Naive thymus-derived CD4-positive, alpha-beta T cell (primary cell): ENCODE measurements at regions of chr2 and their contacts with region 1.

Region 1: DNA sequence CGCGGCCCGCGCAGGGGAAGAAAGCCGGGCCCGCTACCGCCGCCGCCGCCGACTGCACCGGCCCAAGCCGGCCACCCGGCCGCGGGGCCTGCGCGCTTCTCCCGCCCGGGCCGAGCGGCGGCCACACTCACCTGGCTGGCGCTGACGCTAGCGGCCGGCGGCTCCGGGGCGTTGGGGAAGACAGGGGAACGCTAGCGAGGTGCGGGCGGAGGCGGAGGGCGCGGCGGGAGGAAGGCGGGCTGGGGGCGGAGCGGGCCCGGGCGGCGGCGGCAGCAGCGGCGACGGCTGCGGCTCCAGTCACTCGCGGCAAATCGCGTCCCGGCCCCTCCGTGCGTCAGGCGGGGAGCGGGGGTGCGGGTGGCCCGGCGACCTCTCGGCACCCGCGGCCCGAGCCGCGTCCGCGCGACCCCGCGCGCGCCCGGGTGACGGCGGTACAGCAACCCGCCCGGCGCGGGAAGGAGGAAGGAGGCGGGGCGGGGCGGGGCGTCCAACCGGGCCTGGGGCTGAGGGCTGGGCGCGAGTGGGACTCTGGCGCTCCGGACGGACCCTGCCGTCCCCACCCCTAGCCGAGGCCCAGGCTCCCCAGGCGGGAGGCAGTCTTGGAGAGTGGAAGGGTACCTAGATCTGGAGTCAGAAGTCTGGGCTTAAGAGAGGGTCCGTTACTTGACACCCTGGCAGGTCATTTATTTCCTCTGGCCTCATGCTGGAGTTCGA is at the start of gene SESTD1:
- DNase-seq: peak; percentile 11 to 75 (median 47)
- ATAC-seq: peak; percentile 81
- H3K4me3 ChIP-seq: peak within 1 kb of the TSS; percentile 49
- H3K4me3 Mint-ChIP-seq: peak within 1 kb of the TSS; percentile 77 to 92 (median 86)
- H3K27ac ChIP-seq: peak within 1 kb of the TSS; percentile 60
- H3K27ac Mint-ChIP-seq: peak within 1 kb of the TSS in 7 of 9 donors; percentile 10 to 78 (median 45)
- H3K4me1 ChIP-seq: peaks cover 0 to 5% of the 10 kb centered on the region in 2 donors
- H3K4me1 Mint-ChIP-seq: peaks cover 13 to 24% (median 19%) of the 10 kb centered on the region in 7 donors
- H3K27me3 ChIP-seq: no peaks in the 10 kb centered on the region
- H3K27me3 Mint-ChIP-seq: peaks cover 34 to 48% (median 38%) of the 10 kb centered on the region in 5 donors
- total RNA-seq, gene SESTD1: 6.1 to 23.2 (median 8.1) TPM

Region 2: DNA sequence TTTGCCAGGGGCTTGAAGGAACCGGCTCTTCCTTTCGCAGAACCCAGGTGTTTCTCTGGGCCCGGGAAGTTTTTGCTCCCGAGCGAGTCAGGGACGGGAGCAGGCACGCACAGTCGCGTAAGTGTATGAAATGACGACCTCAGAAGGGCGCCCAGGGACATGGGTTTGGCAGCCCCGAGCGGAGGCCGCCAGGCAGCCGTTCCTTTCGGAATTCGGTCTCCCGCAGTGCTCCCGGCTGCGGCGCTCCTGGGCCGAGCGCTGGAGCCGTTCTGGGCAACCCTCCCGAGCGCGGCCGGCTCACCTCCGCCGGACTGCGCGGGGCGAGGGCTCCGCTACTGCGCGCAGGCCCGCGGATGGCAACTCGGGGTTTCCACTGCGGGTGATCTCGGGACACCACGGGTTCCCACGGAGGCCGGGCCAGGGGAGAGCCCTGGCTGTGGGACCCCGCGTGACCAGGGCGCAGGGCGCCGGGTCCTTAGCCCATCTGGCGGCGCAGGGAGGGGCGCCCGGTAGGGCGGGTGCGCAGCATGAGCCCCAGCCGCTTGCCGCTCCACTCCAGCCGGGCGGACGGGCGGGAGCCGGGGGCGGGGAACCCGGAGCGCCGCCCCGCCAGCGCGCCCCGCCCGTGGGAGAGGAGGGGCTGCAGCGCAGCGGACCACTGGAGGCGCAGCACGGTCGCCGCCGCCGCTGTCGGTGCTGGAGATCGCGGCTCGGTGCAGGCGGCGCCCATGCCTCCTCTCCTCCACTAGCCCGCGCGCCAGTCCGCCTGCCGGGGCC is 1070.5 kb before region 1 on chr2 and contains the start of gene OSBPL6:
- CTCF ChIA-PET with region 1: no interaction called
- POLR2A ChIA-PET with region 1: no interaction called
- intact Hi-C with region 1: loop called in 1 of 2 experiments (anchors 10 kb)
- DNase-seq: peak; percentile 10 to 82 (median 41)
- ATAC-seq: peak; percentile 87
- H3K4me3 ChIP-seq: peak within 1 kb of the TSS; percentile 46
- H3K4me3 Mint-ChIP-seq: peak within 1 kb of the TSS; percentile 56 to 83 (median 77)
- H3K27ac ChIP-seq: no peak within 1 kb of the TSS
- H3K27ac Mint-ChIP-seq: no peak within 1 kb of the TSS
- H3K4me1 ChIP-seq: peaks cover 6% of the 10 kb centered on the region in 2 donors
- H3K4me1 Mint-ChIP-seq: peaks cover 6 to 19% (median 13%) of the 10 kb centered on the region in 7 donors
- H3K27me3 ChIP-seq: peaks cover 18% of the 10 kb centered on the region in 2 donors
- H3K27me3 Mint-ChIP-seq: peaks cover 45 to 59% (median 54%) of the 10 kb centered on the region in 5 donors
- total RNA-seq, gene OSBPL6: 0.05 to 1.1 (median 0.44) TPM in 4 of 5 experiments, not detected in the other

Region 3: GRCh38 chr2:178450774-178451525 is 813.6 kb before region 1 on chr2 and contains the starts of genes PJVK and PRKRA:
- CTCF ChIA-PET with region 1: no interaction called
- POLR2A ChIA-PET with region 1: no interaction called
- intact Hi-C with region 1: loop called in 1 of 2 experiments (anchors 10 kb)
- DNase-seq: peak; percentile 92 to 99 (median 93)
- ATAC-seq: peak; percentile 94
- H3K4me3 ChIP-seq: peak within 1 kb of the TSS; percentile 94
- H3K4me3 Mint-ChIP-seq: peak within 1 kb of the TSS; percentile 90 to 96 (median 90)
- H3K27ac ChIP-seq: peak within 1 kb of the TSS; percentile 100
- H3K27ac Mint-ChIP-seq: peak within 1 kb of the TSS; percentile 88 to 98 (median 95)
- H3K4me1 ChIP-seq: peaks cover 12 to 25% of the 10 kb centered on the region in 2 donors
- H3K4me1 Mint-ChIP-seq: peaks cover 12 to 36% (median 30%) of the 10 kb centered on the region in 7 donors
- H3K27me3 ChIP-seq: no peaks in the 10 kb centered on the region
- H3K27me3 Mint-ChIP-seq: peaks cover 0 to 9% (median 0%) of the 10 kb centered on the region in 5 donors
- total RNA-seq, gene PJVK: 2.1 to 6.3 (median 3.8) TPM
- total RNA-seq, gene PRKRA: 40.8 to 113 (median 59.4) TPM

Region 4: DNA sequence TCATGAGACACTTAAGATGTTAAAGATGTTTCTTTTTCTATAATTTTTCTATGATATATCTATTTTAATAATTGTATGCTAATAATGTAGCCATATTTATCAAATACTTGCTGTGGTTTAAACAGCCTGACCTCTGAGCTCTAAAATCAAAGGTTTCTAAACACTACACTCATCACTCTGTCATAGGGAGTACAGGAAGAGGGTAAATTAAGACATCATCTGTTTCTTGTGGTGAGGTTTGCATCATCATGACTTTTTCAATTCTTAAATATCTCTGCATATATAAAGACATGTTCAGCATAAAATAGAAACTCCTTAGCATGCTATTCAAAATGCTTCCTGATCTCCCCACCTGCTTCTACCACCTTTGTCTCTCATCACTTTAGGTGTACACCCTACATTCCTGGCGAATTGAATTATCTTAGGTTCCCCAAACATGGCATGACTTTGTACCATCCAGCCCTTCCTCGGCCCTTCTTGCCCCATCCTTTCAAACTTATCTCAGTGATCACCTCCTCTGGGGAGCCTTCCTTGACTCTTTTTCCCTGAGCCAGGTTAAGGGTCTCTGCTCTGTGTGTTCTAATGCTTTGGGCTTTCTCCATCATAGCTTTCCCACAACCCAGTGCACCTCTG is 352.0 kb before region 1 on chr2:
- CTCF ChIA-PET with region 1: no interaction called
- POLR2A ChIA-PET with region 1: no interaction called
- intact Hi-C with region 1: no loop called
- DNase-seq: no peak
- ATAC-seq: peak; percentile 56
- H3K4me3 ChIP-seq: no peak overlapping the region
- H3K4me3 Mint-ChIP-seq: no peak overlapping the region
- H3K27ac ChIP-seq: no peak overlapping the region
- H3K27ac Mint-ChIP-seq: peak overlapping the region in 1 of 9 donors; percentile 9
- H3K4me1 ChIP-seq: no peaks in the 10 kb centered on the region
- H3K4me1 Mint-ChIP-seq: peaks cover 0 to 17% (median 4%) of the 10 kb centered on the region in 7 donors
- H3K27me3 ChIP-seq: no peaks in the 10 kb centered on the region
- H3K27me3 Mint-ChIP-seq: no peaks in the 10 kb centered on the region

Region 5: GRCh38 chr2:179049546-179050311 is 214.8 kb before region 1 on chr2 and contains the start of gene CCDC141:
- CTCF ChIA-PET with region 1: no interaction called
- POLR2A ChIA-PET with region 1: no interaction called
- intact Hi-C with region 1: loop called in 1 of 2 experiments (anchors 10 kb)
- DNase-seq: peak; percentile 7 to 57 (median 40)
- ATAC-seq: peak; percentile 78
- H3K4me3 ChIP-seq: peak within 1 kb of the TSS; percentile 56
- H3K4me3 Mint-ChIP-seq: peak within 1 kb of the TSS; percentile 79 to 97 (median 93)
- H3K27ac ChIP-seq: peak within 1 kb of the TSS; percentile 81
- H3K27ac Mint-ChIP-seq: peak within 1 kb of the TSS; percentile 89 to 99 (median 97)
- H3K4me1 ChIP-seq: peaks cover 4 to 36% of the 10 kb centered on the region in 2 donors
- H3K4me1 Mint-ChIP-seq: peaks cover 10 to 67% (median 52%) of the 10 kb centered on the region in 7 donors
- H3K27me3 ChIP-seq: no peaks in the 10 kb centered on the region
- H3K27me3 Mint-ChIP-seq: no peaks in the 10 kb centered on the region
- total RNA-seq, gene CCDC141: 11.6 to 39.2 (median 35.1) TPM

Region 6: GRCh38 chr2:179239195-179239594 is 25.3 kb before region 1 on chr2:
- CTCF ChIA-PET with region 1: no interaction called
- POLR2A ChIA-PET with region 1: no interaction called
- intact Hi-C with region 1: loop called (anchors 1 kb)
- DNase-seq: peak in 7 of 9 donors; percentile 0 to 32 (median 22)
- ATAC-seq: peak; percentile 48
- H3K4me3 ChIP-seq: no peak overlapping the region
- H3K4me3 Mint-ChIP-seq: peak overlapping the region in 3 of 10 donors; percentile 10 to 39 (median 18)
- H3K27ac ChIP-seq: no peak overlapping the region
- H3K27ac Mint-ChIP-seq: peak overlapping the region in 2 of 9 donors; percentile 35 to 73
- H3K4me1 ChIP-seq: peaks cover 0 to 4% of the 10 kb centered on the region in 2 donors
- H3K4me1 Mint-ChIP-seq: peaks cover 10 to 49% (median 21%) of the 10 kb centered on the region in 7 donors
- H3K27me3 ChIP-seq: no peaks in the 10 kb centered on the region
- H3K27me3 Mint-ChIP-seq: peaks cover 0 to 10% (median 5%) of the 10 kb centered on the region in 5 donors

Region 7: GRCh38 chr2:179247318-179248023 is 17.1 kb before region 1 on chr2:
- CTCF ChIA-PET with region 1: interaction called, 4 read pairs
- POLR2A ChIA-PET with region 1: interaction called, 4 read pairs
- intact Hi-C with region 1: loop called in 1 of 2 experiments (anchors 2 kb)
- DNase-seq: no peak
- ATAC-seq: no peak
- H3K4me3 ChIP-seq: no peak overlapping the region
- H3K4me3 Mint-ChIP-seq: peak overlapping the region in 4 of 10 donors; percentile 11 to 63 (median 22)
- H3K27ac ChIP-seq: no peak overlapping the region
- H3K27ac Mint-ChIP-seq: peak overlapping the region in 2 of 9 donors; percentile 18 to 58
- H3K4me1 ChIP-seq: no peaks in the 10 kb centered on the region
- H3K4me1 Mint-ChIP-seq: peaks cover 0 to 47% (median 4%) of the 10 kb centered on the region in 7 donors
- H3K27me3 ChIP-seq: no peaks in the 10 kb centered on the region
- H3K27me3 Mint-ChIP-seq: peaks cover 0 to 4% (median 0%) of the 10 kb centered on the region in 5 donors

Region 8: GRCh38 chr2:179253226-179253625 is 11.3 kb before region 1 on chr2:
- CTCF ChIA-PET with region 1: interaction called, 4 read pairs
- POLR2A ChIA-PET with region 1: interaction called, 4 read pairs
- intact Hi-C with region 1: loop called (anchors 1 kb)
- DNase-seq: no peak
- ATAC-seq: no peak
- H3K4me3 ChIP-seq: no peak overlapping the region
- H3K4me3 Mint-ChIP-seq: peak overlapping the region in 2 of 10 donors; percentile 0 to 24
- H3K27ac ChIP-seq: no peak overlapping the region
- H3K27ac Mint-ChIP-seq: peak overlapping the region in 3 of 9 donors; percentile 51 to 78 (median 74)
- H3K4me1 ChIP-seq: no peaks in the 10 kb centered on the region
- H3K4me1 Mint-ChIP-seq: peaks cover 0 to 48% (median 10%) of the 10 kb centered on the region in 7 donors
- H3K27me3 ChIP-seq: no peaks in the 10 kb centered on the region
- H3K27me3 Mint-ChIP-seq: peaks cover 0 to 13% (median 0%) of the 10 kb centered on the region in 5 donors